ENCODE measurements at regions of chr14 and their contacts with region 1.

Region 1: GRCh38 chr14:92951912-92952471 is 29.0 kb downstream of the CHGA start:
- DNase-seq: peak; percentile 70 to 94
- H3K4me3 ChIP-seq: no peak overlapping the region
- CTCF ChIP-seq: peak in 1 of 3 donors; percentile 59
- POLR2A ChIP-seq: no peak

Region 2: GRCh38 chr14:93003945-93004698 is 52.1 kb after region 1 on chr14:
- intact Hi-C with region 1: loop called (anchors 1 kb)
- DNase-seq: no peak
- H3K4me3 ChIP-seq: no peak overlapping the region
- CTCF ChIP-seq: no peak
- POLR2A ChIP-seq: no peak

Region 3: DNA sequence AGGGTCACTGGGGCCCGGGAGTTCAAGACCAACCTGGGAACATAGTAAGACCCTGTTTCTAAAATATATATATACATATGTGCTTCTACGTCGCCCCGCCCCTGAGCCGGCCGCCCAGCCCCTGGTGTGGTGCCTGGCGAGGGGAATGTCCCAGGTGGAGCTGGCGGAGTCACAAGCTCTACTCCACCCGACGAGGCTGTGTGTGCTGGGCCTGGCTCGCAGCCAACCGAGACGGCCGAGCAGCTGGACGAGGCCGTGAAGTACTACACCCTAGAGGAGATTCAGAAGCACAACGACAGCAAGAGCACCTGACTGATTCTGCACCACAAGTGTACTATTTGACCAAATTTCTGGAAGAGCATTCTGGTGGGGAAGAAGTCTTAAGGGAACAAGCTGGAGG is 185.9 kb after region 1 on chr14:
- intact Hi-C with region 1: loop called (anchors 5 kb)
- DNase-seq: no peak
- H3K4me3 ChIP-seq: no peak overlapping the region
- CTCF ChIP-seq: no peak
- POLR2A ChIP-seq: no peak

Measured in lower leg skin (tissue), 4 donors.